ENCODE measurements at regions of chr2 and their contacts with region 1.

Region 1: GRCh38 chr2:231198291-231199173 is at the start of gene ARMC9:
- DNase-seq: peak; percentile 79
- ATAC-seq: peak; percentile 95
- H3K4me3 Mint-ChIP-seq: peak within 1 kb of the TSS; percentile 93
- H3K27ac Mint-ChIP-seq: peak within 1 kb of the TSS; percentile 68
- H3K4me1 Mint-ChIP-seq: peaks cover 11% of the 10 kb centered on the region
- H3K27me3 Mint-ChIP-seq: peaks cover 6% of the 10 kb centered on the region
- CTCF ChIP-seq: no peak
- total RNA-seq, gene ARMC9: 9.0 and 9.5 TPM in 2 replicates

Region 2: GRCh38 chr2:231181860-231182512 is 16.5 kb before region 1 on chr2:
- CTCF ChIA-PET with region 1: no interaction called
- POLR2A ChIA-PET with region 1: no interaction called
- intact Hi-C with region 1: loop called (anchors 2 kb)
- DNase-seq: peak; percentile 39
- ATAC-seq: peak; percentile 88
- H3K4me3 Mint-ChIP-seq: peak overlapping the region; percentile 44
- H3K27ac Mint-ChIP-seq: peak overlapping the region; percentile 80
- H3K4me1 Mint-ChIP-seq: peaks cover 37% of the 10 kb centered on the region
- H3K27me3 Mint-ChIP-seq: peaks cover 1% of the 10 kb centered on the region
- CTCF ChIP-seq: no peak

Measured in activated B cell treated with CpG ODN at 0.5 μM for 24 hours (primary cell).